GM13976 (cell line): ENCODE measurements at regions of chr13 and their contacts with region 1.

Region 1: GRCh38 chr13:45301243-45301642 is 39.7 kb downstream of the TPT1 start:
- DNase-seq: no peak
- CTCF ChIP-seq: no peak

Region 2: DNA sequence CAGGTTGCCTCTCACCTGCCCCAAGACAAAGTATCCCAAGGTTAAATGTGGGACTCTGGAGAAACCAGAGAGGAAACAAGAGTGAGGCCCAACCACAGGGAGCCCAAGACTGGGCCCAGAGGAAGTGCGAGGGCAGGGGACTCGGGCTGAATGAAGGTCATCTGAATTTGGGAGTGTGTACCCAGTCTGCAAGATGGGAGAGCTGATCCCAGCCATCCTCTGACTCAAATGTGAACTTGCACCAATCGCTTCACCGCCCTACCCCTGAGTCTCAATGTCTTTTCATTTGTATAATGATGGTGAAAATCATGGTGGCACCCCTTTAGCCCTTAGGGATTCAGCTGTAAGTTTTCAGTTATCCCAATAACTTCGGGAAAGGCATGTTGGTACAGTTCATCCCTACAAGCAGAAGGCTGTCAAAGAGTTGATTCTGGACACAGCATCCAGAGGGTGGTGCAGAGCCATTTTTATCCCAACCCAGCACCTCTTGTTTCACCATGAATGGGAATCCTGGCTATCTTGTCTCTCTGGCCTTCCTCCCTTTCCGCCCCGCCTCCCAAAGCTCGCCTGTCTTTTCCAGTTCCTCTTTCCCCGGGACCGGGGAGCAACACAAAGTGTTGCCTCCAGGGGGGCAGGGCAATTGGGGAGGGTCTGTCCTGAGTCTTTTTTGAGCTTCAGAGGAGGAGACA is 435.4 kb before region 1 on chr13:
- in situ Hi-C with region 1: no loop called
- DNase-seq: no peak
- CTCF ChIP-seq: no peak

Region 3: GRCh38 chr13:45047394-45048310 is 253.6 kb before region 1 on chr13:
- in situ Hi-C with region 1: loop called (anchors 5 kb)
- DNase-seq: peak; percentile 82
- CTCF ChIP-seq: peak; percentile 80

Region 4: DNA sequence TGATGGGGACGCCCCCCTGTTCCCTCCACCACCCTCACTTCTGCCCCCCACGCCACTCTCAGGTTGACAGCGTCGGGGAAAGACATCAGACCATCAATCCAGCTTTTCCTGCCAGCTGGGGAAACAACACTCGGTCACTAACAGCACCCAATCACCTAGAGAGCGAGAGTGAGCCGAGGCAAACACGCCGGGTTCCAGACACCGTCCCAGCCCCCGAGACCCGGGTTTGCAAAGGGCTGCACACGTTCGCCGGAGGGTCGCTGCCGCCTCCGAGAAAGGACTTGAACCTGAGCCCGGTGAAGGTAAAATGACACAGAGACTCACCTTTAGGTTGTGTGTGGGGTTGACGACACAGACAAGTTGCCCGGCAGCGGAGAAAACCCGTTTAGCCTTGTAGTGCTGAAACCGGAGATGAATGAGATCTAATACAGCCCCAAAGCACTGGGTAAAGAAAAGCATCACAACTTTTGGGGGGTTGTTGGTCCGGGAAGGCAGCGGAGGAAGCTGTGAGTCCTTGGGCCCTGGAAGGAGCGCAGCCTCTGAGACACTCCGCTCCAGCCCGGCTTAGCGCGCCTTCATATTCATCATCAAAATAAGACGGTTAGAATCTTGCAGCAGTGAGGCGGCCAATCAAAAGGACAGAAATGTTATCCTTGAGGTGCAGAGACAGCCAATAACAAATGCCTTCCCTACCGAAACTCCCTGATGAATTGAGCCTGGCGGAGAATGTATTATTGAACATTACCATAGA is 550.1 kb after region 1 on chr13 and contains the start of gene SIAH3:
- in situ Hi-C with region 1: no loop called
- DNase-seq: no peak
- CTCF ChIP-seq: no peak